ENCODE measurements at regions of chr18 and their contacts with region 1.

Region 1: DNA sequence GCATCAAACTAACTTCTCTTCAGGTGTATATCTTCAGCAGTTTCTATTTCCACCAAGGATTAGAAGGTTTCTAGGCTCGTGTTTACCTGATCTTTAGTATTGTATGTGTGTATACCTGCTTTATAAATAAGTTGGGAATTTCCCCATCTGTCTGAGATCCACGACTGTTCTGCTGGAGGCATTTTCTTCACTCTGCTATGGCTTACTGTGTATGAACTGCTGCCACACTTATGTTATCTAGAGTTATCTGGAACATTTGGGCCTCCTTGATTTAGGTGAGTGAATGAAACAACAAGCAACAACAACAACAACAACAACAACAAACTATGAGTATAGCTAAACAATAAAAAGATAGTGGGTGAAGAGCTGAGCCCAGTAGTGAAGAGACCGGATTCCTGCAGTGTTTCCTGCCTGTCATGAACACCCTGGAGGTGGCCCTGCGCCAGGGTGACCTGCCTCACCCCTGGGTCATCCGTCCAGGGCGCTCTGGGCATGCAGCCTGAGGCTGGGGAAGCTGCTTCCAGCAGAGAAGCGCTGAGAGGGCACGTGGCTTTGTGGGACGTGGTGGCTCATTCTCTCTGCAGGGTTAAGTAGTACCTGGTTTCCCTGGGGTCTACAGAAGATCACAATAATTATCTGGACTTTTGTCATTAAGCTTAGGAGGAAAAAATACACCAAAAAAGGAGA is 56.1 kb upstream of the GATA6 start:
- DNase-seq: no peak
- ATAC-seq: no peak
- H3K4me3 Mint-ChIP-seq: no peak overlapping the region
- H3K27ac Mint-ChIP-seq: no peak overlapping the region
- H3K4me1 Mint-ChIP-seq: no peaks in the 10 kb centered on the region
- H3K27me3 Mint-ChIP-seq: no peaks in the 10 kb centered on the region

Region 2: DNA sequence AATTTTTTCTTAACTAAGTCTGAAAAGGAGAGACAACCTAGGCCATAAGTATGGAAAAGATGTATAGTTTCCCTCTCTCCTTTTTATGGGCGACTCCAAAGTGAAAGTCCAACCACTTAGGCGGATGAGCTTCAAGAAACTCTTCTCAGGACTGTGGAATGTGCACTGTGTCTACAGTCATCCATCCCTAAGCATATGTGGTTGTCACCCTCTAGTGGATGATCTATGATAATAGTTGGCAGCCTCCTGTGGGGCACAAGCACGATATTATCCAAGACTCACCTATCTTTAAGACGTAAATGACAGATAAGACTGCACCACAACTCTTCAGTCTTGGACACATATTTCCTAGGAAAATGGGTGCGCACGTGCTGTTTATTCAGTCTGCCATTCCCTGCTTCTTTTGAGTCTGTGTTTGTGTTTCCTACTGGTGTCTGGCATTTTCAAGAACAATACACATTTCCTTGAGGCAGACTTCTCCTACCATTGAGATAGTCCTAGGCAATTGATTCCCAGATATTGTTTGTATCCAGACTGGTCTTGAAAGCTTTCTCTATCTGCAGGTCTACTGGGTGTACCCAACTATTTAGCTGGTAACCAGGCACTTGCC is 449.9 kb after region 1 on chr18:
- CTCF ChIA-PET with region 1: no interaction called
- POLR2A ChIA-PET with region 1: no interaction called
- intact Hi-C with region 1: loop called in 1 of 2 experiments (anchors 10 kb)
- DNase-seq: peak; percentile 9
- ATAC-seq: peak; percentile 55
- H3K4me3 Mint-ChIP-seq: no peak overlapping the region
- H3K27ac Mint-ChIP-seq: no peak overlapping the region
- H3K4me1 Mint-ChIP-seq: peaks cover 5% of the 10 kb centered on the region
- H3K27me3 Mint-ChIP-seq: peaks cover 29% of the 10 kb centered on the region